ENCODE measurements at regions of chr2 and their contacts with region 1.

Region 1: DNA sequence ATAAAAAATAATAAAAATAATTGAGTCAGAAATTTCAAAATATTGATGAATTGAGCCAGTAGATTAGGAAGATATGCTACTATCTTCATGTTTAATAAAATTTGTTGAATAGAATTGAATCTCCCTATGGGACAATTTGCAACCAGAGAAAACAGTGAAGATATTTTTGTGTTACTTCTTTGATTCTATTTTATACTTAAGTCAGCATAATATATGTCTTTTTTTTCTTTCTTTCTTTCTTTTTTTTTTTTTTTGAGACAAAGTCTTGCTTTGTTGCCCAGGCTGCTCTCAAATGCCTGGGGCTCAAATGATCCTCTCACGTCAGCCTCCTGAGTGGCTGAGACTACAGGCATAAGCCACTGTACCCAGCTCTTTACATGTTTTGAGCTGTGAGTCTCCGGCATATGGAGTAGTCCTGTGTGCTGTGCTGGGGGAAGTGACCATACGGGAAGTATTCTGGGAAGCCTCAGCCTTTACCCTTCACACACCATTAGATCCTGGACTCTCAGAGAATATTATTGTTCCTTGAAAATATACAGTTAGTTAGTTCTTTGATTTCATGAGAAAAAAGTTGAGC is 13.8 kb upstream of the IAH1 start:
- DNase-seq: peak in 1 of 2 donors; percentile 5
- H3K4me3 ChIP-seq: no peak overlapping the region
- CTCF ChIP-seq: no peak
- POLR2A ChIP-seq: no peak

Region 2: DNA sequence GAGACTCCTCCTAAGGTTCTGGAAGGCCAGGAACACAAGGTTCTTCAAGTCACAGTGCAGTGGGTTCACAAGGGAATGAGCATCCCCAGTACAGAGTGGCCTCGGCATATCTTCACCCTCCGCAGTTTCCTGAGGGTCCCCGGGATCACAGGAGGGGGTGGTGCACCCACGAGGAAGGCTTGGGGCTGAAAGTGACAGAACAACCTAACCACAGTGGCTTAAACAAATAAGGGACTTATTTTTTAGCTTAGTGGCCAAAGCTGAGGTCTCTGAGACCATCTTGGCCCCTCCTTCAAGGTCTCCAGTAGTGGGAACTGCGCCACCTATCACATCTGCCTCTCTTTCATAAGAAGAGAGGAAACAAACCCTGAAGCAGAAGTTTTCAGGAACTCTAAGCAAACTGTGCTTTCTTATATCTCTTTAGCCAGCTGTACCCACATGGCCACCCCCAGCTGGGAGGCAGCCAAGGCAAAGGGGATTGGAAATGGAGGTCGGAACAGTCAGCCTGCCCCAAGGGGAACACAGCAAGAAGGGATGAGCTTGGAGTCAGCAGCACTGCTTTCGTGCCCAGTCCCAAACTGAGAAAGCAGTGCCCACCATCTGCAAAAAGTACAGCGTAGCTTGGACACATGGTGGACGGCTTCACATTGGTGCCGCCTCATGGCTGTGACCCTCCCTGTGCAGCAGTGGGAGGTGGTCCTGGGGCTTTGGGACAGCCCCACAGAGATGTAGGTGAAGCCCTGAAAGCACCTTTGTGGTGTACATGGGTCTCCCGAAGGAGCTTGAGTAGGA is 1038.7 kb before region 1 on chr2:
- intact Hi-C with region 1: no loop called
- DNase-seq: peak in 1 of 2 donors; percentile 68
- H3K4me3 ChIP-seq: no peak overlapping the region
- CTCF ChIP-seq: no peak
- POLR2A ChIP-seq: no peak

Region 3: DNA sequence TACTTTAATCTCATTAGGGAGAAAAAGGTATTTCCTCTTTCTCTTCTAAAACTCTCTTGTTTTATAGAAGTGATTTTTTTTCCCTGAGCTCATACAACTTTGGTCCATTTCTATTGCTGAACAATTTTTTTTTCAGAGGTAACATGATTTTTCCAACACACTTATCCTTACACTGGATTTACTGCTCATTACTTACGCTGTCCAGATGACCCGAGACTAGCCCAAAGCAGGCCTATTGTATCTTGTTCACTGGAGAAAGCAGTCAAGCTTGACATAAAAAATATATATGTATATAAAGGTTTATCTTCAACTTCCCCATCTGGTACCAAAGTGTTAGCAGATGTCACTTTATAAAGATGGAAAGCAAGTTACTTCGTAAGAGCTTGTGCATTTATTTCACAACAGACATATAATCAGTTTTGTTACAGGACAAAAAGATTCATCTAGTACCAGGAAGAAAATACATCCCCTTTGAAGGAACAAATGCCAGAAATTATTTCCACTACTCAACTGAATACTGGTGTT is 552.7 kb before region 1 on chr2:
- intact Hi-C with region 1: no loop called
- DNase-seq: no peak
- H3K4me3 ChIP-seq: no peak overlapping the region
- CTCF ChIP-seq: no peak
- POLR2A ChIP-seq: no peak

Region 4: GRCh38 chr2:9497017-9497416 is 36.5 kb after region 1 on chr2:
- intact Hi-C with region 1: loop called (anchors 1 kb)
- DNase-seq: no peak
- H3K4me3 ChIP-seq: no peak overlapping the region
- CTCF ChIP-seq: no peak
- POLR2A ChIP-seq: no peak

Region 5: DNA sequence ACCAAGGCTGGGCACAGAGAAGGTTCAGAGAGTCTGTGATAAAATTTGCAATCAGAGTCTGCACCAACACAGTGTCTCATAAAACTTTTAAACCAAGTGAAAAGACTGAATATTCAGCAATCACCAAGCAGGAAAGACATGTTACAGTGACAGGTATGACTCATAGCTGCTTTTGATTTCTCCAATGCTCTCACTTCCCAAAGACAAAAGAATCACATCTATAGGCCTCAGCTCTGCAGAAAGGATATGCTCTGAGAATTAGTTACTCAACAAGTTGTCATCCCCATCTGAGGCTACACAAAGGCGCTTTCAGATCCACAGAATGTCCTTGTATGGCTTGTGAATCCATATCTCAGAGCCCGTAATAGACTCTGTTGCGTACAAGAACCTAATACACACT is 1543.7 kb after region 1 on chr2:
- intact Hi-C with region 1: no loop called
- DNase-seq: no peak
- H3K4me3 ChIP-seq: no peak overlapping the region
- CTCF ChIP-seq: no peak
- POLR2A ChIP-seq: no peak

Measured in lower leg skin (tissue), 4 donors.